HepG2 (cell line): ENCODE measurements at regions of chr6 and their contacts with region 1.

Region 1: GRCh38 chr6:38639498-38640215 is at the start of gene BTBD9:
- DNase-seq: peak; percentile 45
- ATAC-seq: peak; percentile 90
- H3K4me3 ChIP-seq: peak within 1 kb of the TSS; percentile 86 to 96 (median 95)
- H3K27ac ChIP-seq: peak within 1 kb of the TSS; percentile 59
- H3K4me1 ChIP-seq: peaks cover 27% of the 10 kb centered on the region
- H3K27me3 ChIP-seq: no peaks in the 10 kb centered on the region
- CTCF ChIP-seq: no peak
- EP300 ChIP-seq: no peak
- POLR2A ChIP-seq: peak; percentile 45 to 53; a peak in 3 of 4 replicates
- RAD21 ChIP-seq: peak; percentile 27; the same call in 1 of the 2 replicates
- total RNA-seq, gene BTBD9: 1.8 and 3.0 TPM in 2 replicates

Region 2: DNA sequence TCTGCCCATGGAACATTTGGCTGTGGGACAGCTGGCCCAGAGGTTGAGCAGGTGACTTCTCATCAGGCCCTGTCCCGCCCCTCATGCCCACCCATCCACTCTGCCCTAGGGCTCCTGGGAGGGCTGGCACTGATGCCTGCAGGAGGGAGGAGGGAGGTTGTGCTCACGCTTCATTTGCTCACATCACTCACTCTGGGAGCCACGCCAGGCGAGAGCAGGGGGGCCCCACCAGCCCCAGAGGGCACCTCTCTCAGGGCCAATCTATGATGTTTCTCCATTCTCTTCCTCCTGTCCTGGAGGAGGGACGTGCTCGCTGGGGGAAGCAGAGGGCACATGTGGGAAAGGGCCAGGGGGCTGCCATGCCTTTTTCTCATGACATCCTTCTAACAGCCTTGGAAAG is 398.1 kb after region 1 on chr6:
- CTCF ChIA-PET with region 1: no interaction called
- POLR2A ChIA-PET with region 1: no interaction called
- in situ Hi-C with region 1: no loop called
- intact Hi-C with region 1: loop called (anchors 5 kb)
- DNase-seq: no peak
- ATAC-seq: no peak
- H3K4me3 ChIP-seq: no peak overlapping the region
- H3K27ac ChIP-seq: no peak overlapping the region
- H3K4me1 ChIP-seq: no peaks in the 10 kb centered on the region
- H3K27me3 ChIP-seq: peaks cover 6 to 39% of the 10 kb centered on the region in 2 experiments
- CTCF ChIP-seq: no peak
- EP300 ChIP-seq: no peak
- POLR2A ChIP-seq: no peak
- RAD21 ChIP-seq: no peak